ENCODE measurements at regions of chr6 and their contacts with region 1.

Region 1: DNA sequence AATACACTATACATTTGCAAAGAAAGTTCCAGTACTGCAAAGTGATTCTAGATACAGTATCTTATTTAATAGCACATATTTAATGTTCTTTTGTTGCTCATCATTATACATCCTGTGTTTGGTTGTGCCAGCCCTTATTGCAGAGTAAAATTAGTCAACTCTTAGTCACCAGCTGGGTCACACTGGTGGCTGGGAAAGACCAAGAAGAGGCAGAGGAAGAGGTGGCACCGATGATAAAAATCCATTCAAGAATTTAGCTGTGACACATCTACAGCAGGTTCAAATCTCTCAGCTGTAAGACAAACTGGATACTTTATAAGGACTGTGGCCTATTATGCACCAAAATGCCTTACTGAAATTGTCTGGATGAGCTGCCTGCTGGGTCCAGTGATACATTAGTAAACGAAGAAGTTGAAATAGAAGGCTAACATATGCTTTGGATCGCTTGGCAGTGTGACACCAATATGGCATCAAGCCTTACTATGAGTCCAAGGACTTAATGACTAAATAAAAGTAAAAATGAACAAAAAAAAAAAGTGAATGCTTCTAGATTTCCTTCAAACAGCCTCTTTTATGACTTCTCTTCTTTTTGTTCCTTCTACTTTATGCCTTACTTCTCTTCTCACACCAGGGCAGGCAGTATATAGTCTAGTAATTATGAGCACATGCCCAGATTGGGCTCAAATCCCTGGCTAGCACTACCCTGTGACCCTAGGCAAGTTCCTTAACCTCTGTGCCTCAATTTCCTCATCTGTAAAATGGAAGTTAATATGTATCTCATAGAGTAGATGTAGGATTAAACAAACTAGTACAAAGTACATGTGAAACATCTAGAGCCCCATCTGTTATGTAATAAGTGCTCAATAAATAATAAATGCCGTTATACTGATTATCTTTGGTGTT is 29.4 kb upstream of the RNF8 start:
- DNase-seq: no peak
- ATAC-seq: no peak

Region 2: GRCh38 chr6:35859367-35859766 is 1465.0 kb before region 1 on chr6:
- intact Hi-C with region 1: no loop called
- DNase-seq: no peak
- ATAC-seq: no peak

Region 3: DNA sequence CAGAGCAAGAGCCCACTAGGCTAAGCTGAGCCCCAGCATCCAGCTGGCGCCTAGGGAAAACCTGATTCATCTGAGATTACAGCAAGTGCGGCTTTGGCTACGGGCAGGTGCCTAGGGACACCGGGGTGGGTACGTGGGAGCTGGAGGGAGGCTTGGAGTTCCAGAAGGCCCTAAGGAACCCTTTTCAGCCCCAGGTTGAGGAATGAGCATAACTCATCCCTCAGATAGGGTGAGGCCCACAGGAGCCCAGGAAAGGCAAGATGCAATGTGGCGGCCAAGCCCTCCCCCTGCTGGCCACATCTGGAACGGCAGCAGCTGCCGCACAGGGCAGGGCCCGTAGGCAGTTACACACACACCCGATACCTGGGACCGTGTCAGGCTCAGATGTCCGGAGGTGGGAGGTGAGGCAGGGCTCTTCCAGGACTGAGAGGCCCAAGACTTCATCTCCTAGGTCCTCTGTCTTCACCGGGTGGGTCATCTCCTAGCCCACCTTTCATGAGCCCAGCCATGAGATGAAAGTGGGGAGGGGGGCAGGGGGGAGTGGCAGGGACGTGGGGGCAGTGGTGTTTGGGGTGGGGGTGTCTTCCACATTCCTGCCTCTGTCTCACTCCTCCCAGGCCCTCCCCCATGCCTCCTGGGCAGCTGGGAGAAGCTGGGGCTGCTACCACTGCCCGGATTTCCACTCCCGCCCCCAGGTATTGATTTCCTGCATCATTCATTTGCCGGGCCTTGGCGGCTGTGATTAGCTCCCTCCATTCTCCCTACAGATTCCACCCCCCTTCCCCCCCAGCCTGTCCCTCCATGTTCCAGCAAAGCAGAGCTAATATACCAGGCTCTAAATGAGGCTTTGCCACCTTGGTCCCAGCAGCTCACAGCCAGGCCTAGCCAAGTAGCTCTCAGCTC is 367.8 kb after region 1 on chr6:
- intact Hi-C with region 1: loop called (anchors 10 kb)
- DNase-seq: peak; percentile 83
- ATAC-seq: peak; percentile 82

Region 4: DNA sequence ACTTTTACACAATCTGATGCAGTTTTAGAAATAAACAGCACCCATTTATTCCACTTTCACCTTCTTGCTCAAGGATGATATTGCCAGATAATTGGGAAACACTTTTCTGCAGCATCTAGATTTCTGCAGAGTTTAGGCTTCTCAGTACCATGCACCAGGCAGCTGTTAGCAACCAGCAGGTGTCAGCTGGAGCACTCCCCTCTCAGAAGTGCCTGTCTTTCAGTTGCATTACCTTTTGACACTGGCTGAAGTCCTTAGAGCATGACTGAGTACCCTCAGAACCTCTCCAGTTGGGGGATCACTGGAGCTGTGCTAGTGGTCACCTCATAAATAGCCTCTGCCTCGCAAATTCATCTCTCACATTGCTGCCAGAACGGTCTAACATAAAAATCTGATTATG is 1481.9 kb after region 1 on chr6:
- intact Hi-C with region 1: no loop called
- DNase-seq: no peak
- ATAC-seq: no peak

Measured in left ventricle myocardium superior (tissue), 1 donor.